GM12878 (cell line): ENCODE measurements at regions of chr3 and their contacts with region 1.

Region 1: DNA sequence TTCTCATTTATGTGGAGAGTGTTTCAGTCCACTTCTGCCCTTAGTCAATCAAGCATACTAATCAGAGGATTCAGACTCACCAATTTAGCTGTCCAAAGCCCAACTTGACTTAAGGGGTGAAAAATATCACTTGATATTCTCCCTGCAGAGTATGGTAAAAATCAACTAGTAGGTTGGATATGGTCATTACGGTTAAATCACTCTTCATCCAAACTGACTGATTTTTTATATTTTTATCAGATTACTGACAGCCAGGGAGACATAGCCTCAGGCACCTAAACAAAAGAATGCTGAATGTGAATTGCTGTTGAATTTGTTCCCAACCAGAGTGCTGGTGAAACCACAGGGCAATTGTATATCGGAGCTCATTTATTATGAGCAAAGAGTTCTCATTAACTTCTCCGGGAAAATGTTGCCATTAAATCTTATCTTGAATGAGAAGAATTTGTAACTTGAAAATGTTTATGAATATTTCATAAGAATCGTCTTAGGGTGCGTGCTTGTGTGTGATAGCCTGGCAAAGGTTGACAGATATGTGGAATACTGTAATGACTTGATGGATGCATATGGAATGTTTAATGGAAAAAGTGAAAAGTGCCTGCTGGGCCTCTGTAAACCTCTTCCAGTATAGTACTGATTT is 411.2 kb downstream of the NAALADL2 start:
- DNase-seq: no peak
- ATAC-seq: peak; percentile 8
- H3K4me3 ChIP-seq: peak overlapping the region; percentile 77
- H3K27ac ChIP-seq: peak overlapping the region; percentile 35; the same call in 1 of the 2 replicates
- H3K4me1 ChIP-seq: no peaks in the 10 kb centered on the region
- H3K27me3 ChIP-seq: no peaks in the 10 kb centered on the region
- CTCF ChIP-seq: no peak
- EP300 ChIP-seq: no peak
- POLR2A ChIP-seq: no peak
- RAD21 ChIP-seq: no peak

Region 2: GRCh38 chr3:175082631-175083030 is 187.7 kb before region 1 on chr3:
- CTCF ChIA-PET with region 1: no interaction called
- POLR2A ChIA-PET with region 1: no interaction called
- RAD21 ChIA-PET with region 1: no interaction called
- SMC1A ChIA-PET with region 1: no interaction called
- in situ Hi-C with region 1: no loop called
- intact Hi-C with region 1: no loop called
- DNase-seq: no peak
- ATAC-seq: no peak
- H3K4me3 ChIP-seq: no peak overlapping the region
- H3K27ac ChIP-seq: no peak overlapping the region
- H3K4me1 ChIP-seq: no peaks in the 10 kb centered on the region
- H3K27me3 ChIP-seq: no peaks in the 10 kb centered on the region
- CTCF ChIP-seq: no peak
- EP300 ChIP-seq: no peak
- POLR2A ChIP-seq: no peak
- RAD21 ChIP-seq: no peak

Region 3: DNA sequence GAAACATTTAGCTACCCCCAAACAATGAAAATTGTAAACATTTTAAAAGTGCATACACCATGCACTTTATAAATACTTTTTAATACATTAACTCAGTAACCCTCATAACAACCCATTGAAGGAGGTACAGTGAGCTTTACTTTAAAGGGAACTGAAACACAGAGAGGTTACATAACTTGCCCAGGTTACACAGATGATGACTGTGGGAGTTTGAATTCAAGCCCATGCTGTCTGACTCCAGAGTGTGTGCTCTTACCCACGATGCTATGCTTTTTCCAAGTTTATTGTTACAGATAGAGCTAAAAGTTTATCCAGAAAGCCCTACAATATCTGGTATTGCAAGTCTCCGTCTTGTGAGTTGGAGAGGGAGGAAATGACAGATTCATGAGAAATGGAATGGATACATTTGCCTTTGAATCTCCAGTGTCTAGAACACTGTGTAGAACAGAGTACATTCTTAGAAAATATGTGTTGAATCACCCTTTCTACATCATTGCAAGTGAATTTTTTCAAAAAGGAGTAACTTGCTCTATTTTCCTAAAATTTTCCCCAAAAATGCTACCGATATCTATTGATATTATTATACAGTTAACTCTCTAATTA is 17.1 kb after region 1 on chr3:
- CTCF ChIA-PET with region 1: interaction called, 43 read pairs
- POLR2A ChIA-PET with region 1: interaction called, 28 read pairs
- RAD21 ChIA-PET with region 1: interaction called, 55 read pairs
- SMC1A ChIA-PET with region 1: interaction called, 98 read pairs
- in situ Hi-C with region 1: no loop called
- intact Hi-C with region 1: no loop called
- DNase-seq: peak; percentile 54
- ATAC-seq: peak; percentile 100
- H3K4me3 ChIP-seq: no peak overlapping the region
- H3K27ac ChIP-seq: no peak overlapping the region
- H3K4me1 ChIP-seq: no peaks in the 10 kb centered on the region
- H3K27me3 ChIP-seq: no peaks in the 10 kb centered on the region
- CTCF ChIP-seq: no peak
- EP300 ChIP-seq: peak in 1 of 2 experiments; percentile 32; a peak in 1 of 4 replicates
- POLR2A ChIP-seq: no peak
- RAD21 ChIP-seq: no peak

Region 4: DNA sequence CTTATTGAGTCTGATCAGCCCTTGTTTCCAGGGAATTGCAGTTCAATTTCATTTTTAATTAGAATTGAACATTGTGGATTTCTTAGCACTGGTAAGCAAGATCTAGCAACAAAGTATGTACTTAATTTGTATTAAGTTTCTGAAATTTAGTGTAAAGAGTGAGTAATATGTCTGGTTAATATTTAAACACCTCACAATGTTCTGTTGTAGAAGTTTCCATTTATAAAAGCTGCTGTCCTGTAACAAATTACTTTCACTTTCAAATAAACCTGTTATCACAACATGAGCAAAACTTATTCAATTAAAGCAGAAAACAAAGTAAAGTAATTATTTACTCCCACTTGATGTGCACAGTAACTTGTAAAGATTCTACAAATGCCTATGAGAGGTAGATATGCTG is 37.3 kb after region 1 on chr3:
- CTCF ChIA-PET with region 1: interaction called, 4 read pairs
- POLR2A ChIA-PET with region 1: interaction called, 5 read pairs
- RAD21 ChIA-PET with region 1: interaction called, 41 read pairs
- SMC1A ChIA-PET with region 1: interaction called, 34 read pairs
- in situ Hi-C with region 1: no loop called
- intact Hi-C with region 1: no loop called
- DNase-seq: no peak
- ATAC-seq: peak; percentile 88
- H3K4me3 ChIP-seq: no peak overlapping the region
- H3K27ac ChIP-seq: no peak overlapping the region
- H3K4me1 ChIP-seq: no peaks in the 10 kb centered on the region
- H3K27me3 ChIP-seq: no peaks in the 10 kb centered on the region
- CTCF ChIP-seq: no peak
- EP300 ChIP-seq: 0 out of 4 replicates have a peak, but pooled peaks of 1 of the 2 experiments have one; percentile 32
- POLR2A ChIP-seq: no peak
- RAD21 ChIP-seq: no peak

Region 5: DNA sequence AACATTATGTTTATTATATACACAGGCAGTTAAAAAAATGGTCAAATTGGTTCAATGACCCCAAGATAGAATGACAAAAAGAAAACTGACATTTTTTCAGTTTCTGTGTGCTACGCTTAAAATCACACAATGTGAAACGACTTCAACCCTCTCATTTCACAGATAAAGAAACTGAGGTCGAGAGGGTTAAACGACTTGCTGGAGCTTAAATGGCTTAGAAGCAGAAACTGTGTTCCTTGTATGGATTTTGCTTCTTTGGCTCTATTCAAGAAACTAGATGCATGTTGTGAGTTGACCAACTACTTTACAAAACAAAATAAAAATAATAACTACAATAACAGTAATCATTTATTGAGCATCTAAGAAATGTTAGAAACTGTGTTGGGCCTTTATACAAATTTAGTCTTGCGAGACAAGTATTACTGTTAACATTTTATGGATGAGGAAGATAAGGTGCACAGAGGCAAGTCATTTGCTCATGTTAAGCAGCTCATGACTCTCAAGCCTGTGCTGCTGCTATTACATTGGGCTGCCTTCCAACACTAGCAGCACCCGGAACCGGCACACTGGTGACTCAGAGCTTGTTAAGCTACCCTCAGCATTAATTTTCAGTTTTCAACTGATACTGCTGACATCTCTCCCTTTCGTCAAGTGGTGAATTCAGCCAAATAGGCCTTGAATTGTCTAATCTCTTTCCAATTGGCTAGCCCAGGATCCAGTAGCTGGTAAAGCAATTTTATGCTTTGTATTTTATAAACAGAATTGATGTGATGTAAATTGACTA is 76.4 kb after region 1 on chr3:
- CTCF ChIA-PET with region 1: interaction called, 53 read pairs
- POLR2A ChIA-PET with region 1: interaction called, 20 read pairs
- RAD21 ChIA-PET with region 1: interaction called, 52 read pairs
- SMC1A ChIA-PET with region 1: interaction called, 164 read pairs
- in situ Hi-C with region 1: no loop called
- intact Hi-C with region 1: loop called (anchors 2 kb)
- DNase-seq: peak; percentile 16
- ATAC-seq: peak; percentile 90
- H3K4me3 ChIP-seq: no peak overlapping the region
- H3K27ac ChIP-seq: no peak overlapping the region
- H3K4me1 ChIP-seq: no peaks in the 10 kb centered on the region
- H3K27me3 ChIP-seq: no peaks in the 10 kb centered on the region
- CTCF ChIP-seq: no peak
- EP300 ChIP-seq: no peak
- POLR2A ChIP-seq: no peak
- RAD21 ChIP-seq: no peak

Region 6: GRCh38 chr3:175378348-175378747 is 108.0 kb after region 1 on chr3:
- CTCF ChIA-PET with region 1: interaction called, 5 read pairs
- POLR2A ChIA-PET with region 1: no interaction called
- RAD21 ChIA-PET with region 1: interaction called, 6 read pairs
- SMC1A ChIA-PET with region 1: interaction called, 16 read pairs
- in situ Hi-C with region 1: no loop called
- intact Hi-C with region 1: no loop called
- DNase-seq: peak; percentile 39
- ATAC-seq: peak; percentile 96
- H3K4me3 ChIP-seq: no peak overlapping the region
- H3K27ac ChIP-seq: no peak overlapping the region
- H3K4me1 ChIP-seq: no peaks in the 10 kb centered on the region
- H3K27me3 ChIP-seq: no peaks in the 10 kb centered on the region
- CTCF ChIP-seq: no peak
- EP300 ChIP-seq: no peak
- POLR2A ChIP-seq: no peak
- RAD21 ChIP-seq: no peak

Region 7: DNA sequence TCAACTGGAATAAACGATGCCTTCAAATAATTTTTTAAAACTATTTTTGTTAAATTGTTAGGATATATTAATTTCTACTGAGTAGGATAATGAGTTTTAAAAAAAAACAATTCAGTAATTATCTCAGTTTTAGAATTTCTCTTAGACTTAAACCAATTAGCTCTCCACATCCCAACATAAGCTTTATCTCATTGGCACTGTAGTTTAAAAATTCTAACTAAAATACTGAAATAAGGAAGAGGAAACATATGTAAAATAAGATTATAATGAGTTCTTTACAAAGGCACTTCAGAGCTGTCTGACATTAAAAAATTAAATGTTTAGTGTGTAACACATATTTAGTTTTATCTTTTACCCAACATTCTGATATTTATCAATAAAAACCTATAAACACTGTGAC is 147.1 kb after region 1 on chr3:
- CTCF ChIA-PET with region 1: interaction called, 11 read pairs
- POLR2A ChIA-PET with region 1: no interaction called
- RAD21 ChIA-PET with region 1: interaction called, 3 read pairs
- SMC1A ChIA-PET with region 1: interaction called, 15 read pairs
- in situ Hi-C with region 1: no loop called
- intact Hi-C with region 1: no loop called
- DNase-seq: no peak
- ATAC-seq: no peak
- H3K4me3 ChIP-seq: no peak overlapping the region
- H3K27ac ChIP-seq: no peak overlapping the region
- H3K4me1 ChIP-seq: no peaks in the 10 kb centered on the region
- H3K27me3 ChIP-seq: no peaks in the 10 kb centered on the region
- CTCF ChIP-seq: no peak
- EP300 ChIP-seq: no peak
- POLR2A ChIP-seq: no peak
- RAD21 ChIP-seq: no peak

Region 8: GRCh38 chr3:175941356-175941755 is 671.0 kb after region 1 on chr3:
- CTCF ChIA-PET with region 1: interaction called, 4 read pairs
- POLR2A ChIA-PET with region 1: no interaction called
- RAD21 ChIA-PET with region 1: interaction called, 10 read pairs
- SMC1A ChIA-PET with region 1: interaction called, 5 read pairs
- in situ Hi-C with region 1: no loop called
- intact Hi-C with region 1: no loop called
- DNase-seq: no peak
- ATAC-seq: peak; percentile 92
- H3K4me3 ChIP-seq: no peak overlapping the region
- H3K27ac ChIP-seq: no peak overlapping the region
- H3K4me1 ChIP-seq: no peaks in the 10 kb centered on the region
- H3K27me3 ChIP-seq: no peaks in the 10 kb centered on the region
- CTCF ChIP-seq: peak; percentile 46 to 70 (median 60)
- EP300 ChIP-seq: no peak
- POLR2A ChIP-seq: no peak
- RAD21 ChIP-seq: peak; percentile 74